Activated CD4-positive, alpha-beta T cell treated with anti-CD3 and anti-CD28 coated beads for 36 hours (primary cell): ENCODE measurements at regions of chr9 and their contacts with region 1.

Region 1: DNA sequence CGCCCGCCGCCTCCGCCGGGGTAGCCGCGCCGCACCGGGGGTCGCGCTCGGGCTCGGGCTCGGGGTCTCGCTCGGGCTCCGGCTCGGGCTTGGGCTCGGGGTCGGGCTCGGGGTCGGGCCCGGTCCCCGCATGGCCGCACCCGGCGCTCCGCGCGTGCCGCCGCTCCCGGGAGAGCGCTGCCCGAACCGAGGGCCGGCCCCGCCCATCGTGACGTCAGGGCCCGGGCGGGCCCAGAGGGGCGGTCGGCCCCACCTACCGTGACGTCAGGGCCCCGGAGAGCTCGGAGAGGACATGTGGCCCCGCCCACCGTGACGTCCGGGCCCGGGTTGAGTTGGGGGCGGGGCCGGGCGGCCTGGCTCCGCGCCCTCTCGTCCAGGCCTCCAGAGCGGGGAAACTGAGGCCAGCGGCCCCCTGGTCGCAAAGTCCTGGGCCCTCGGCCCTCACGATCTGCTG is at the start of gene NSMF:
- DNase-seq: peak; percentile 98
- ATAC-seq: peak; percentile 66
- H3K4me3 Mint-ChIP-seq: peak within 1 kb of the TSS; percentile 39
- H3K27ac Mint-ChIP-seq: peak within 1 kb of the TSS; percentile 78
- H3K4me1 Mint-ChIP-seq: peaks cover 33% of the 10 kb centered on the region
- H3K27me3 Mint-ChIP-seq: no peaks in the 10 kb centered on the region
- total RNA-seq, gene NSMF: 63.6 to 65.0 TPM

Region 2: GRCh38 chr9:137254624-137255447 is 204.3 kb before region 1 on chr9 and contains the start of gene NELFB:
- CTCF ChIA-PET with region 1: no interaction called
- POLR2A ChIA-PET with region 1: no interaction called
- intact Hi-C with region 1: loop called in 1 of 2 experiments (anchors 1 kb)
- DNase-seq: peak; percentile 97
- ATAC-seq: peak; percentile 94
- H3K4me3 Mint-ChIP-seq: peak within 1 kb of the TSS; percentile 87
- H3K27ac Mint-ChIP-seq: peak within 1 kb of the TSS; percentile 81
- H3K4me1 Mint-ChIP-seq: peaks cover 18% of the 10 kb centered on the region
- H3K27me3 Mint-ChIP-seq: no peaks in the 10 kb centered on the region
- total RNA-seq, gene NELFB: 41.4 to 54.1 TPM

Region 3: DNA sequence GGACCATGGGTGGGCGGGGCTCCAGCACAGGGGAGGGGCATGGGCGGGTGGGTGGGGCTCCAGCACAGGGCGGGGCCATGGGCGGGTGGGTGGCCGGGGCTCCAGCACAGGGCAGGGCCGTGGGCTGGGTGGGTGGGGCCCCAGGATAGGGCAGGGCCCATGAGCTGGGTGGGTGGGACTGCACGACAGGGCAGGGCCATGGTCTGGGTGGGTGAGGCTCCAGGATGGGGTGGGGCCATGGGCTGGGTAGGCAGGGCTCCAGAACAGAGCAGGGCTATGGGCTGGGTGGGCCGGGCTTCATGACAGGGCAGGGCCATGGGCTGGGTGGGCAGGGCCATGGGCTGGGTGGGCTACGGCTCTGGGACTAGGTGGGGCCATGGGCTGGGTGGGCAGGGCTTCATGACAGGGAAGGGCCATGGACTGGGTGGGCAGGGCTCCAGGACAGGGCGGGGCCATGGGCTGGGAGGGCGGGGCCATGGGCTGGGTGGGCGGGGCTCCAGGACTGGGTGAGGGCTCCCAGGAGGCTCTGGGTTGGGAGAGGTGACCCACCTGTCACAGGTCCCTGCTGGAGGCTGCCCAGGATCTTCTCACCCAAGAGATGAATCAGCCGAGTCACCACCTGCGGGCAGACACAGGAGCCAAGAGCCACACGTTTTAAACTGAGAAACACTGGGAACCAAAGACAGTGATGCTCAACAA is 33.4 kb after region 1 on chr9:
- CTCF ChIA-PET with region 1: no interaction called
- POLR2A ChIA-PET with region 1: no interaction called
- intact Hi-C with region 1: loop called in 1 of 2 experiments (anchors 1 kb)
- DNase-seq: peak; percentile 63
- ATAC-seq: peak; percentile 85
- H3K4me3 Mint-ChIP-seq: no peak overlapping the region
- H3K27ac Mint-ChIP-seq: no peak overlapping the region
- H3K4me1 Mint-ChIP-seq: peaks cover 3% of the 10 kb centered on the region
- H3K27me3 Mint-ChIP-seq: no peaks in the 10 kb centered on the region